ENCODE measurements at regions of chr7 and their contacts with region 1.

Region 1: GRCh38 chr7:100538654-100539435 is at the start of gene AGFG2:
- DNase-seq: peak; percentile 98 to 100 (median 100)
- ATAC-seq: peak; percentile 99
- H3K4me3 ChIP-seq: peak within 1 kb of the TSS; percentile 73
- H3K4me3 Mint-ChIP-seq: peak within 1 kb of the TSS; percentile 85 to 100 (median 96)
- H3K27ac ChIP-seq: peak within 1 kb of the TSS; percentile 64
- H3K27ac Mint-ChIP-seq: peak within 1 kb of the TSS; percentile 82 to 97 (median 90)
- H3K4me1 ChIP-seq: peaks cover 30 to 39% of the 10 kb centered on the region in 2 donors
- H3K4me1 Mint-ChIP-seq: peaks cover 26 to 53% (median 48%) of the 10 kb centered on the region in 7 donors
- H3K27me3 ChIP-seq: no peaks in the 10 kb centered on the region
- H3K27me3 Mint-ChIP-seq: peaks cover 0 to 2% (median 0%) of the 10 kb centered on the region in 5 donors
- total RNA-seq, gene AGFG2: 15.8 to 42.4 (median 23.3) TPM

Region 2: GRCh38 chr7:100493476-100494264 is 45.2 kb before region 1 on chr7:
- CTCF ChIA-PET with region 1: interaction called, 3 read pairs
- POLR2A ChIA-PET with region 1: interaction called, 5 read pairs
- intact Hi-C with region 1: loop called in 1 of 2 experiments (anchors 1 kb)
- DNase-seq: peak in 8 of 9 donors; percentile 45 to 65 (median 56)
- ATAC-seq: peak; percentile 81
- H3K4me3 ChIP-seq: peak overlapping the region; percentile 53
- H3K4me3 Mint-ChIP-seq: peak overlapping the region; percentile 72 to 85 (median 80)
- H3K27ac ChIP-seq: peak overlapping the region; percentile 45
- H3K27ac Mint-ChIP-seq: peak overlapping the region; percentile 20 to 84 (median 67)
- H3K4me1 ChIP-seq: peaks cover 0 to 8% of the 10 kb centered on the region in 2 donors
- H3K4me1 Mint-ChIP-seq: peaks cover 8 to 26% (median 21%) of the 10 kb centered on the region in 7 donors
- H3K27me3 ChIP-seq: no peaks in the 10 kb centered on the region
- H3K27me3 Mint-ChIP-seq: peaks cover 0 to 26% (median 0%) of the 10 kb centered on the region in 5 donors

Region 3: GRCh38 chr7:100516135-100516812 is 22.6 kb before region 1 on chr7:
- CTCF ChIA-PET with region 1: interaction called, 3 read pairs
- POLR2A ChIA-PET with region 1: interaction called, 13 read pairs
- intact Hi-C with region 1: loop called (anchors 1 to 2 kb)
- DNase-seq: peak in 7 of 9 donors; percentile 34 to 70 (median 55)
- ATAC-seq: peak; percentile 89
- H3K4me3 ChIP-seq: peak overlapping the region; percentile 41
- H3K4me3 Mint-ChIP-seq: peak overlapping the region; percentile 51 to 79 (median 74)
- H3K27ac ChIP-seq: peak overlapping the region; percentile 52
- H3K27ac Mint-ChIP-seq: peak overlapping the region; percentile 38 to 92 (median 81)
- H3K4me1 ChIP-seq: peaks cover 23 to 29% of the 10 kb centered on the region in 2 donors
- H3K4me1 Mint-ChIP-seq: peaks cover 23 to 55% (median 33%) of the 10 kb centered on the region in 7 donors
- H3K27me3 ChIP-seq: no peaks in the 10 kb centered on the region
- H3K27me3 Mint-ChIP-seq: peaks cover 0 to 3% (median 0%) of the 10 kb centered on the region in 5 donors

Region 4: DNA sequence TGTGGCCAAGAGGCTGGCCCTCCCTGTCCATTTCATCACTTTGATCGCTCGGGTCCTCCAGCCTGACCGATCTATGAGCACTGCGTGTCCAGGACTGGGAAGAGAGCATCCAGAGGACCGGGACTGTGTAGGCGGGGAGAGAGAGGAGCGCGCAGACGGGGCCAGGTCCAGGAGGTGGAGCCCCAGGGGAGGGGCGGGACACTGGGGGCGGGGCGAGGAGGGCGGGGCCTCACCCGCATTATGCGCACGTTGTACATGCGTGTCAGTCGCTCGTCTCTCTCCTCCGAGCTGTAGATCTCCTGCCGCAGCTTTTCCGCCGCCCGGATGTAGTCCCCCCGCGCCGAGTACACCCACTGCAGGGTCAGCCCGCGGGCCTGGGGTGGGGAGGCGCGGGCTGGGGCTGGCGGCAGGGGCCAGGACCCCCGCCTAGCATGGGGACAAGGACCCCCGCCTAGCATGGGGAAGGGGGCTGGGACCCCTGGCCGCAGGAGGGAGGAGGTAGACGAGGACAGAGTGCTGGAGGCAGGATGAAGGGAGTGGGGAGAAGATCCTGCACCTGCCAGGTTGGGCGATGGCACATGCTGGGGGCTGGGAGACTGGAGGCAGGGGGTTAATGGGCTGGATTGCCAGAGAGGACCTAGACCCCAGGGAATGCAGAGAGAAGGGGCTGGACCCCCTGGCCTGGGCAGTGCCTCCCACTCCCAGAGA is 87.8 kb after region 1 on chr7:
- CTCF ChIA-PET with region 1: no interaction called
- POLR2A ChIA-PET with region 1: no interaction called
- intact Hi-C with region 1: loop called in 1 of 2 experiments (anchors 1 kb)
- DNase-seq: peak; percentile 56 to 88 (median 81)
- ATAC-seq: peak; percentile 99
- H3K4me3 ChIP-seq: peak overlapping the region; percentile 58
- H3K4me3 Mint-ChIP-seq: peak overlapping the region; percentile 60 to 87 (median 76)
- H3K27ac ChIP-seq: peak overlapping the region; percentile 84
- H3K27ac Mint-ChIP-seq: peak overlapping the region; percentile 49 to 88 (median 75)
- H3K4me1 ChIP-seq: peaks cover 14 to 18% of the 10 kb centered on the region in 2 donors
- H3K4me1 Mint-ChIP-seq: peaks cover 26 to 58% (median 43%) of the 10 kb centered on the region in 7 donors
- H3K27me3 ChIP-seq: peaks cover 0 to 4% of the 10 kb centered on the region in 2 donors
- H3K27me3 Mint-ChIP-seq: no peaks in the 10 kb centered on the region

Measured in naive thymus-derived CD4-positive, alpha-beta T cell (primary cell).